CD8-positive, alpha-beta T cell (primary cell): ENCODE measurements at regions of chr5 and their contacts with region 1.

Region 1: GRCh38 chr5:172984243-172984953 is 827 bp downstream of the ATP6V0E1 start:
- DNase-seq: peak; percentile 52 to 90 (median 76)
- ATAC-seq: peak; percentile 84
- H3K4me3 ChIP-seq: peak overlapping the region; percentile 78 to 100
- H3K4me3 Mint-ChIP-seq: peak overlapping the region; percentile 97
- H3K27ac ChIP-seq: peak overlapping the region; percentile 74 to 99
- H3K27ac Mint-ChIP-seq: peak overlapping the region; percentile 98
- H3K4me1 ChIP-seq: peaks cover 18% of the 10 kb centered on the region
- H3K4me1 Mint-ChIP-seq: peaks cover 48% of the 10 kb centered on the region
- H3K27me3 ChIP-seq: no peaks in the 10 kb centered on the region
- H3K27me3 Mint-ChIP-seq: no peaks in the 10 kb centered on the region
- CTCF ChIP-seq: peak; percentile 52

Region 2: DNA sequence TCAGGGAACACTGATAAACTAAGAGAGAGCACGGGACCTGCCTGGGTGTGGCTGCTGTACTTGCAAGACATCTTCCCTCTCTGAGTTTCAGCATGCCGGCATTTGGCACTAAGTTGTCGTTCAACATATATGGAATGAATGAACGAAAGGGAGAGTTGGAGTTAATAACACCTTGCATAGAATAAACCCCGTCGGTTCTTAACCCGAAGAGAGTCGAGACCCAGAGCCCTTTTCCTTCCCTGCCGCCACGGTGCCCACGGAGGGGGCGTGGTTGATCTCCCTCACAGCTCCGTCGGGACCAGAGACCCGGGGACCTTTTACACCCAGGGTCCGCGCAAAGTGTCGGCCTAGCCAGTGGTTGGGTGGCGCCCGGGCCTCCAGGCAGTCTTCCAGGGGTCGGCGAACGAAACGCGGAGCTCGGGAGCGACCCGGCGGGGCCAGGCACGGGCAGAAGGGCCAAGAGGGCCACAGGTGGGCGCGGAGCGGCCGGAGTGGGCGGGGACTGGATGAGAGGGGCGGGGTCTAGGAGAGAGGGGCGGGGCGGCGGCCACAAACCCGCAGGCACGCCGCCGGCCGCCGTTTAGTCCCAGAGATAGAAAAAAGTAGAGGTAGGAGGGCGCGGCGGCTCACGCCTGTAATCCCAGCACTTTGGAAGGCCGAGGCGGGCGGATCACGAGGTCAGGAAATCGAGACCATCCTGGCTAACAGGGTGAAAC is 25.9 kb before region 1 on chr5:
- CTCF ChIA-PET with region 1: interaction called, 4 read pairs
- POLR2A ChIA-PET with region 1: interaction called, 14 read pairs
- intact Hi-C with region 1: loop called (anchors 1 kb)
- DNase-seq: peak; percentile 23 to 79 (median 63)
- ATAC-seq: peak; percentile 65
- H3K4me3 ChIP-seq: peak overlapping the region; percentile 76 to 77
- H3K4me3 Mint-ChIP-seq: peak overlapping the region; percentile 97
- H3K27ac ChIP-seq: peak overlapping the region; percentile 65 to 87
- H3K27ac Mint-ChIP-seq: peak overlapping the region; percentile 98
- H3K4me1 ChIP-seq: peaks cover 13% of the 10 kb centered on the region
- H3K4me1 Mint-ChIP-seq: peaks cover 38% of the 10 kb centered on the region
- H3K27me3 ChIP-seq: no peaks in the 10 kb centered on the region
- H3K27me3 Mint-ChIP-seq: no peaks in the 10 kb centered on the region
- CTCF ChIP-seq: no peak

Region 3: DNA sequence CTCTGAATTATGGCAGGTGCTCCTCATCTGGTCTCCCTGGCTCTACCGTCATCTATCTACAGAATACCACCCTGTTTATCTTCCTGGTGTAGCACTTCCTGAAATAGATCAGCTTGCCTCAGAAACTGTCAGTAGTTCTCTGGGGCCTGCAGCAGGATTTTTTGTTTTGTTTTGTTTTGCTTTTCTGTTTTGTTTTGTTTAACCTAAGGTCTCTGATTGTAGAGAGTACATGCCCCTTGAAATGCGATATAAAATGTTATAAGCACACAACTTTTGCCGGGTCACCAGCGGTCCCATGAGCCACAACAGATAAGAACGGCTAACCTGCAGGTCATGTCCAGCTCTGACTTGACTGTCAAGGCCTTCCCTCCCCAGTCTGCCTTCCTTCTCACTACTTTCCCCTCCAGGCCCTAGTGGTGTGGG is 45.1 kb after region 1 on chr5:
- CTCF ChIA-PET with region 1: interaction called, 5 read pairs
- POLR2A ChIA-PET with region 1: interaction called, 3 read pairs
- intact Hi-C with region 1: loop called in 1 of 2 experiments (anchors 5 kb)
- DNase-seq: peak in 1 of 9 experiments; percentile 19
- ATAC-seq: peak; percentile 56
- H3K4me3 ChIP-seq: no peak overlapping the region
- H3K4me3 Mint-ChIP-seq: no peak overlapping the region
- H3K27ac ChIP-seq: peak overlapping the region in 1 of 2 experiments; percentile 40
- H3K27ac Mint-ChIP-seq: no peak overlapping the region
- H3K4me1 ChIP-seq: peaks cover 33% of the 10 kb centered on the region
- H3K4me1 Mint-ChIP-seq: peaks cover 22% of the 10 kb centered on the region
- H3K27me3 ChIP-seq: no peaks in the 10 kb centered on the region
- H3K27me3 Mint-ChIP-seq: no peaks in the 10 kb centered on the region
- CTCF ChIP-seq: no peak

Region 4: GRCh38 chr5:173283318-173284288 is 299.2 kb after region 1 on chr5:
- CTCF ChIA-PET with region 1: interaction called, 6 read pairs
- POLR2A ChIA-PET with region 1: interaction called, 3 read pairs
- intact Hi-C with region 1: loop called in 1 of 2 experiments (anchors 2 kb)
- DNase-seq: peak; percentile 30 to 77 (median 68)
- ATAC-seq: peak; percentile 98
- H3K4me3 ChIP-seq: peak overlapping the region in 1 of 2 experiments; percentile 20
- H3K4me3 Mint-ChIP-seq: peak overlapping the region; percentile 26
- H3K27ac ChIP-seq: no peak overlapping the region
- H3K27ac Mint-ChIP-seq: no peak overlapping the region
- H3K4me1 ChIP-seq: peaks cover 6% of the 10 kb centered on the region
- H3K4me1 Mint-ChIP-seq: peaks cover 8% of the 10 kb centered on the region
- H3K27me3 ChIP-seq: peaks cover 0 to 12% of the 10 kb centered on the region in 2 experiments
- H3K27me3 Mint-ChIP-seq: peaks cover 78% of the 10 kb centered on the region
- CTCF ChIP-seq: peak; percentile 53

Region 5: GRCh38 chr5:173412566-173412965 is 428.2 kb after region 1 on chr5:
- CTCF ChIA-PET with region 1: no interaction called
- POLR2A ChIA-PET with region 1: no interaction called
- intact Hi-C with region 1: no loop called
- DNase-seq: no peak
- ATAC-seq: no peak
- H3K4me3 ChIP-seq: no peak overlapping the region
- H3K4me3 Mint-ChIP-seq: no peak overlapping the region
- H3K27ac ChIP-seq: no peak overlapping the region
- H3K27ac Mint-ChIP-seq: no peak overlapping the region
- H3K4me1 ChIP-seq: no peaks in the 10 kb centered on the region
- H3K4me1 Mint-ChIP-seq: no peaks in the 10 kb centered on the region
- H3K27me3 ChIP-seq: no peaks in the 10 kb centered on the region
- H3K27me3 Mint-ChIP-seq: peaks cover 15% of the 10 kb centered on the region
- CTCF ChIP-seq: no peak

Region 6: DNA sequence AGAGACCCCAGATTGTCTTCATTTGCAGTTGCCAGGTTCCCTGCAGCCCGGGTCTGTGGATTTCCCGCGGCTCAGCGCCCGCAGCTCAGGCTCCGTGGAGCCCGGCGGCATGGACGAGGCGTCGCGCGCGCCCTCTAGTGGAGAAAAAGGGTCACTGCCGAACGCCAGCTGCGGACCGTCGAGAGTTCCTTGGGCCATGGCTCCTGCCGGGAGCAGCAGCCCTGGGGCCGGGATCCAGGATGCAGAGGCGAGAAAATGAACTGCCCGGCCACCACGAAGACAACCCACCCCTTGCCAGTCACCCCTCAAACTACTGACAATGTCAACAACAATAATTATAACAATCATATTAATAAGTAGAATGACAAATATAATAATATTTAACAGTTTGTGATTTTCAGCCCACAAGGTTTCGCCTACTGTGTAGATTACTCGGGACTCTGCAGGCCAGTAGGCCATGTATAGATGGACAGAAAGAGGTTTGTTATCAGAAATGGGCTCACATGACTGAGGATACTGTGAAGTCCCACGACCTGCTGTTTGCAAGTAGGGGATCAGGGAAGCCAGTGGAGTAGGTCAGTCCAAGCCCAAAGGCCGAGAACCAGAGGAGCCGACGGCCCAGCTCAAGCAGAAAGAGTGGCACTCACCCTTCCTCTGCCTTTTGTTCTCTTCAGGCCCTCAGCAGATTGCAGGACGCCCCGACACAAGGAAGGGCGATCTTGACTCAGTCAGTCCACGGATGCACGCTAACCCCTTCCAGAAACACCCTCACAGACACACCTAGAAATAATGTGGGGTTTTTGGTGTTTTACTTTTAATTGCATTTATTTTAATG is 588.9 kb after region 1 on chr5:
- CTCF ChIA-PET with region 1: interaction called, 3 read pairs
- POLR2A ChIA-PET with region 1: no interaction called
- intact Hi-C with region 1: loop called in 1 of 2 experiments (anchors 5 kb)
- DNase-seq: peak; percentile 39 to 78 (median 64)
- ATAC-seq: peak; percentile 48
- H3K4me3 ChIP-seq: no peak overlapping the region
- H3K4me3 Mint-ChIP-seq: no peak overlapping the region
- H3K27ac ChIP-seq: no peak overlapping the region
- H3K27ac Mint-ChIP-seq: no peak overlapping the region
- H3K4me1 ChIP-seq: peaks cover 4% of the 10 kb centered on the region
- H3K4me1 Mint-ChIP-seq: peaks cover 7% of the 10 kb centered on the region
- H3K27me3 ChIP-seq: peaks cover 5 to 6% of the 10 kb centered on the region in 2 experiments
- H3K27me3 Mint-ChIP-seq: peaks cover 26% of the 10 kb centered on the region
- CTCF ChIP-seq: peak; percentile 94

Region 7: DNA sequence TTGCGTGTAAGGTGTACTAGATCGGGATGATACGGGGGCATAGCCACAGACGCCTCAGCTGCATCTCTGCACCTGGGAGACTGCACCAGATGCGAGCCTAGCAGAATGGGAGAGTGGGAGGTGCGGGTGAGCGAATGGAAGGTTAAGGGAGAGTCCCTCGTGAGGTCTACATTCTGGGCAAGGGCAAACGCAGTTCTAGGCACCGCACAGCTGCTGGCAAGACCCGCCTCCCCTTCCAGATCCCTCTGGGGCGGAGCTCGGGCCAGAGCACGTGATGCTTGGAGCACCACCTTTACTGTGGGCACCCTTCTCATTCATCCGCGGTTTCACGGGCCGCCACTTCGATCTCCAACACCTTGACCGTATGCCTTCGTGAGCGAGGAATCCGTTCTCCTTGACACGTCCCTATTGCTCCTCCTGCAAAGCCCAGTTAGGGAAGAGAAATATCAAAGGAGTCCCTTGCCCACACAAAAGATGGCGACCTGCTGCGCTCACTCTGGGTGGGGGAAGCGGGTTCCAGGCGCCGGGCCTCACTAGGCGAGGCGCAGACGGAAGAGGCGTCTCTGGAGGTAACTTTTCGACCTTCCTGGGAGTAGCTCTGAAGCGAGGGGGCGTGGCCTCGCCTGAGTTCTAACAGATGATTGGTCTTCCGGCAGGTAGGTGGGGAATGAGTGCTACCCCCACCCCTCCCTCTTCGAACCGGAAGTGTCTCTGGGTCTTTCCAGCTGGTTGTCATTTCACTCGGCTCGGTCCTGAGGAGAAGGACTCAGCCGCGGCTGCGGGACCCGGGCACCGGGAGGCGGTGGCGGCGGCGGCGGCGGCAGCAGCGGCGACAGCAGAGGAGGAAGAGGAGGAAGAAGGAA is 903.4 kb after region 1 on chr5 and contains the start of gene CPEB4:
- CTCF ChIA-PET with region 1: no interaction called
- POLR2A ChIA-PET with region 1: no interaction called
- intact Hi-C with region 1: loop called in 1 of 2 experiments (anchors 10 kb)
- DNase-seq: peak; percentile 92 to 100 (median 96)
- ATAC-seq: peak; percentile 95
- H3K4me3 ChIP-seq: peak within 1 kb of the TSS; percentile 68 to 76
- H3K4me3 Mint-ChIP-seq: peak within 1 kb of the TSS; percentile 100
- H3K27ac ChIP-seq: peak within 1 kb of the TSS; percentile 42 to 97
- H3K27ac Mint-ChIP-seq: peak within 1 kb of the TSS; percentile 99
- H3K4me1 ChIP-seq: peaks cover 48% of the 10 kb centered on the region
- H3K4me1 Mint-ChIP-seq: peaks cover 78% of the 10 kb centered on the region
- H3K27me3 ChIP-seq: no peaks in the 10 kb centered on the region
- H3K27me3 Mint-ChIP-seq: no peaks in the 10 kb centered on the region
- CTCF ChIP-seq: no peak
- total RNA-seq, gene CPEB4: 21.7 to 24.3 TPM

Region 8: DNA sequence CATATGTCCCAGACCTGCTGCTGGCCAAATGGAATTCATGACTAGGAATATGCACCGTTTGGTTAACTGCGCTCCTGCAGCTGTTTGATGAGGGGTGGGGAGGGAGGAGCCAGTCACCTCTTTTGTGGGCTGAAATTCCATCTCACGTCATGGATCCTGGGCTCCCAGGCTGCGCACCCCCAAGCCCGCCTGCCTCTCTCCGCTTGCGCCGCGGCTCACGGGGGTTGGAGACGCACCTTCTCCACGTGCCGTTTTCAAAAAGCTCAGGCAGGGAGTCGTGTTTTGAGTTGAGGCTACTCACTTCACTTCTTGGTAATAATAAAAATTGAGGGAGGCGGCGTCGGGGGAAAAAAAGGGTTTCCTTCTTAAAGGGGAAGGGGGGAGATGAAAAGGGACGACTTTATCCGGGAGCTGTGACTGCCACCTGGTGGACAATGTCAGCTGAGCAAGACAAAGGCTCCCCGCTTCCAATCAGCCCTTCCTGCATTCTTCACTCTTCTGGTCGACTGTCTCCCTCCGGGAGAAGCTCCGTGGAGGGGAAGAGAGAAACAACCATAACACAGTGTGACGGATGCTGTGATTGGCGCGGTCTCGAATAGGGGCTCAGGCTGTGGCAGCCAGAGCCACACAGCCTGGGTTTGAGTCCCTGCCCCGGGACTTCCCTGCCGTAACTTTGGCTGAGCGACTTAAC is 988.7 kb after region 1 on chr5:
- CTCF ChIA-PET with region 1: no interaction called
- POLR2A ChIA-PET with region 1: no interaction called
- intact Hi-C with region 1: loop called in 1 of 2 experiments (anchors 10 kb)
- DNase-seq: peak; percentile 43 to 84 (median 79)
- ATAC-seq: peak; percentile 86
- H3K4me3 ChIP-seq: peak overlapping the region; percentile 25 to 46
- H3K4me3 Mint-ChIP-seq: peak overlapping the region; percentile 79
- H3K27ac ChIP-seq: no peak overlapping the region
- H3K27ac Mint-ChIP-seq: no peak overlapping the region
- H3K4me1 ChIP-seq: peaks cover 5% of the 10 kb centered on the region
- H3K4me1 Mint-ChIP-seq: peaks cover 12% of the 10 kb centered on the region
- H3K27me3 ChIP-seq: no peaks in the 10 kb centered on the region
- H3K27me3 Mint-ChIP-seq: peaks cover 22% of the 10 kb centered on the region
- CTCF ChIP-seq: peak; percentile 77